ENCODE measurements at regions of chr1 and their contacts with region 1.

Region 1: DNA sequence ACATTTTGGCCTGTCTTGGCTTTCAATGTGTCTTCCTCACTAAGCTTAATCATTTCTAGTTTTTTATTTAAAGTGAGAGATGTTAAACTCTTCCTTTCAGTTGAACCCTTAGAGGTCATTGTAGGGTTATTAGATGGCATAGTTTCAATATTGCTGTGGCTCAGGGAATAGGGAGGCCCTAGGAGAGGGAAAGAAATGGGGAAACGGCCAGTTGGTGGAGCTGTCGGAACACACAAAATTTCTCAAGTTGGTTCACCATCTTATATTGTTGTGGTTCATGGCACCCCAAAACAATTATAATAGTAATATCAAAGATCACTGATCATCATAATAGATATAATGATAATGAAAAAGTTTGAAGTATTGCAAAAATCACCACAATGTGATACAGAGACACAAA is 31.4 kb upstream of the KAZN start:
- DNase-seq: peak; percentile 12
- H3K4me3 ChIP-seq: no peak overlapping the region
- H3K27ac ChIP-seq: no peak overlapping the region
- H3K4me1 ChIP-seq: no peaks in the 10 kb centered on the region
- H3K27me3 ChIP-seq: no peaks in the 10 kb centered on the region
- CTCF ChIP-seq: peak; percentile 25 to 45

Region 2: DNA sequence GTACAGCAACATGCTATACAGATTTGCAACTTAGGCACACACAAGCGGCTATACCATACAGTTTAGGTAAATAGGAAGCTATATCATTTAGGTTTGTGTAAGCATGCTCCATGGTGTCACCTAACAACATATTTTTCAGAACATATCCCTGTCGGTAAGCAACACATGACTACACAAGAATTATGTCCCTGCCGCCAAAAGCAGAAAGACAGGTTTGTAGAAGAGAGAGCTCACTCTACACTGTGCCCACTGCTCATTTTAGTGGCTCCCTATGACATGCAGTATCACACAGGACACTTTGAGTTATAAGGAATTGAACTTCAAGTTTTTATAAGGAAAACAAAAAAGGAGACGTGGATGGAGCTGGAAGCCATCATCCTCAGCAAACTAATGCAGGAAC is 101.1 kb before region 1 on chr1:
- CTCF ChIA-PET with region 1: no interaction called
- dilution Hi-C with region 1: loop called (anchors 5 kb)
- in situ Hi-C with region 1: no loop called
- intact Hi-C with region 1: no loop called
- DNase-seq: no peak
- H3K4me3 ChIP-seq: no peak overlapping the region
- H3K27ac ChIP-seq: no peak overlapping the region
- H3K4me1 ChIP-seq: no peaks in the 10 kb centered on the region
- H3K27me3 ChIP-seq: no peaks in the 10 kb centered on the region
- CTCF ChIP-seq: no peak

Region 3: DNA sequence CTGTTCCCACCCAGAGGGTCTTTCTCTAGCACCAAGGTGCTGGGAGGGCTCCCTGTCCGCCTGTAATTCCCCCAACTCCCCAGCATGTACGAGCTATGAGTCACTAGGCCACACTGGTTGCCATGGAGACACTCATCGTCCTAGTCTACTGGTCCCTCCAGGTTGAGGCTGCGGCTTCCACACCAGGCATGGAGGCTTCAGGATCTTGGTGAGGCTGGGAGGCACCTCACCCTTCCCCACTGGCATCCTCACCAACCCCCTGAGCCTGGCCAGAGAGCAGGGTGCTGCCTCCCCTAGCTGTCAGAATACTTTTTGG is 44.2 kb before region 1 on chr1:
- CTCF ChIA-PET with region 1: no interaction called
- dilution Hi-C with region 1: no loop called
- in situ Hi-C with region 1: no loop called
- intact Hi-C with region 1: no loop called
- DNase-seq: peak; percentile 35
- H3K4me3 ChIP-seq: no peak overlapping the region
- H3K27ac ChIP-seq: no peak overlapping the region
- H3K4me1 ChIP-seq: peaks cover 19% of the 10 kb centered on the region
- H3K27me3 ChIP-seq: no peaks in the 10 kb centered on the region
- CTCF ChIP-seq: no peak